ENCODE measurements at regions of chr3 and their contacts with region 1.

Region 1: DNA sequence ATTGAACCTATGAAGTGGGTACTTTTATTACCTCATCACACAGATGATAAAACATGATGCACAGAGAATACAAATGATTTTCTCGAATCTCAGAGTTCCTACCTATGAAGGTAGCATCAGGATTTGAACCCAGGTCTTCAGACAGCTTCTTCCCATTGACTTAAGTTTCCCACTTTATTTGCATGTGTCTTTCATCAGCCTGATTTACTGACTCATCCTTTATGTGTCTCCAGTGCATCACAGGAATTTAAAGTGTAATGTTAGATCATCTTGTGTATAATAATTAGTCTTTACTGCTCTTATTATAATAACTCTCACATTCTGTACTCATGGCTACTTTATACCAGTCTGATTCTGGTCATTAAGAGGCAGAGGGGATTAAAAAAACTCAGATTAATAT is 449.4 kb upstream of the SUCLG2 start:
- DNase-seq: no peak
- H3K4me3 ChIP-seq: no peak overlapping the region
- CTCF ChIP-seq: no peak
- POLR2A ChIP-seq: no peak

Region 2: DNA sequence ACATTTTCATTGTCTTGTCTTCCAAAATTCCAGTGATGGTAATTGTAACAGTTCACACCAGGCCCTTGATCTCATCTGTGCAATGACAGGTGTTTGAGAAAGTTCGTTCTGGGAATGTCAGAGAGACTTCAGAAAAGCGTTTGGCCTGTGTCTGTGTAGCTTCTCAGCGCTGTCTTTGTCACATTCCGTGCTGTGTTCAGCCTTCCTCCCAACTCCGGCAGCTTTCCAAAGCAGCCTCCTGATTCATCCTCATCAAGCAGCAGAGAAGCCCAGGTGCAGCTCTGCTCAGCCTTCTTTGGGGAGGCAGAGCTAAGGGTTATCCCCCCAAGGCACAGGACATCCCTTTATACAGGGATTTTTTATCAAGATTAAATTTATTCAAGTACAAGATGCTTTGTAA is 44.6 kb after region 1 on chr3:
- intact Hi-C with region 1: loop called (anchors 1 kb)
- DNase-seq: no peak
- H3K4me3 ChIP-seq: no peak overlapping the region
- CTCF ChIP-seq: no peak
- POLR2A ChIP-seq: no peak

Region 3: GRCh38 chr3:68206524-68207117 is 102.8 kb after region 1 on chr3:
- intact Hi-C with region 1: no loop called
- DNase-seq: no peak
- H3K4me3 ChIP-seq: no peak overlapping the region
- CTCF ChIP-seq: no peak
- POLR2A ChIP-seq: no peak

Region 4: DNA sequence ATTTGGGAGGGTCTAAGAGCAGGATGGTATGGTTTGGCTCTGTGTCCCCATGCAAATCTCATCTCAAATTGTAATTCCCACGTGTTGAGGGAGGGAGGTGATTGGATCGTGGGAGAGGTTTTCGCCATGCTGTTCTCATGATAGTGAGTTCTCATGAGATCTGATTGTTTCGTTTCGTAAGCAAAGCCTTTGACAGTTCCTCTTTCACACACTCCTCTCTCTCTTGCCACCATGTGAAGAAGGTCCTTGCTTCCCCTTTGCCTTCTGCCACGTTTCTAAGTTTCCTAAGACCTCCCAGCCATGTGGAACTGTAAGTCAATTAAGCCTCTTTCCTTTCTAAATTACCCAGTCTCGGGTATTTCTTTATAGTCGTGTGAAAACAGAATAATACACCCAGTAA is 274.8 kb after region 1 on chr3:
- intact Hi-C with region 1: no loop called
- DNase-seq: no peak
- H3K4me3 ChIP-seq: no peak overlapping the region
- CTCF ChIP-seq: no peak
- POLR2A ChIP-seq: no peak